ENCODE measurements at regions of chr19 and their contacts with region 1.

Region 1: GRCh38 chr19:29878973-29879654 is 62.9 kb upstream of the URI1 start:
- DNase-seq: peak; percentile 61

Region 2: GRCh38 chr19:29815231-29815630 is 63.9 kb before region 1 on chr19:
- intact Hi-C with region 1: no loop called
- DNase-seq: no peak

Region 3: DNA sequence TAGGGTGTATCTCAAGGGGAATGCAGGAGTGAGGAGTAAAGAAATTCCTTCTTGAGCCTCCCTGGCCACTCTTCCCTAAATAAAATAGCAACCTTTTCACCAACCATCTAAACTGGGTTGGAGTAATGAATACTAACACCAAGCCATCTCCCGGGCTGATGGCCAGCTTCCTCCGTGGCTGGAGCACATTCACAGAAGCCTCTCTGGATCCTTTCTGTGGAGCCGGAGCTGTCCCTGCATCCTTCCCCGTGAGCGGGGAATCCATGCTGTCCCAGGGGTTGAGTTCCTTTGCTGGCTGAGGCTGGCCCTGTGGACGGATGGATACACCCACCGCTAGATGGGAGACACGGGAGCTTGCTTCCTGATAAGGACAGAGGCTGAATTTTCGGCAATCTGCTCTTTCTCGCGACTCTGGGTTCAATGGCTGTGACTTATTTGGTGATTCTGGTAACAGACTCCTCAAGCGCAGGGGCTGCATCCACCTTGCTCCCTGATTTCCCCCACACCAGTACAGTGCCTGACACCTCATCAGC is 863.4 kb after region 1 on chr19:
- intact Hi-C with region 1: loop called in 1 of 2 experiments (anchors 5 kb)
- DNase-seq: no peak

Region 4: GRCh38 chr19:31591261-31591660 is 1712.1 kb after region 1 on chr19:
- intact Hi-C with region 1: loop called in 1 of 2 experiments (anchors 5 kb)
- DNase-seq: no peak

Measured in posterior vena cava (tissue), 2 donors.